GM12878 (cell line): ENCODE measurements at regions of chr21 and their contacts with region 1.

Region 1: DNA sequence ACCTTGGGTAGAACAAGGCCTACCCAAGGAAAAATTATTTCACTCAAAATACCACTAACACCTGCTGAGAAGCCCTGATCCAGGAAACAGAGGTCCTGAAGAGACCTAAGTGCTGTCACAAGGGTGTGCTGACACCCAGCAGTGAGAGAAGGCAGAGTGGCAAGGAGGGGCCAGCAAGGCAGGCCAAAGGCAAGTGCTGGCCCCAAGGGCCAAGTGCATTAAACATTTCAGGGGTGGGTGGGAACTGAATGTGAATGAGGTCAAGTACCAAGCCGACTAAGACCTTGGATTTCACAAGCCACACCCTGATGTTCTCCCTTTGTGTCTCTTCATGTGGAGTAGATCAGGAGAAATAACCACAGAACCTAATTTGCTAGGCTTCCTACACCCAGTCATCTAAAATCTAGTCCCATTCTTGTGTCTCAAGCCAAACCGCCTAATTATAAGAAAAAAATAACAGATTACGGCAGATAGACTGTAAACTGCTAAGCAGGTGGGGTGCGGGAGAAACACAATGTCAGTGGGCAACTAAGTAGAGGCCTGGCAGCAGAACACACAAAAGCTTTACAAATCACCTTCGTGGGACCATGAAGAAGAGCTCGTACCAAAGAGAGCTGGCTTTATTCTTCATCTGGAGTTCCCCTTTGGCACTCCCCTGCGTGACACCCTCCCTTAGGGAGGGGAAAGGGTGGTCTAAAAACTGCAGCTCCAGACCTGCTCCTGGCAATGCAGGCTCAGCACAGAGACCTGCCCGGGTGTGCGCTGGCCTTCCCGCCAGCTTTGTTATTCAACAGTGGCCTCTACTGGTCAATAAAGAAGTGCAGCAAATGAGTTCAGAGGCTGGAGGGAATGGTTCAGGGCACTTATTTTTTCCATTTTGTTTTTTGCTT is 8.7 kb downstream of the UBE2G2 start:
- DNase-seq: no peak
- ATAC-seq: peak; percentile 94
- H3K4me3 ChIP-seq: no peak overlapping the region; the same call in 1 of the 2 replicates
- H3K27ac ChIP-seq: peak overlapping the region; percentile 30; the same call in 1 of the 2 replicates
- H3K4me1 ChIP-seq: peaks cover 19% of the 10 kb centered on the region
- H3K27me3 ChIP-seq: no peaks in the 10 kb centered on the region
- CTCF ChIP-seq: peak; percentile 66 to 77 (median 68)
- EP300 ChIP-seq: no peak
- POLR2A ChIP-seq: no peak
- RAD21 ChIP-seq: peak; percentile 82

Region 2: DNA sequence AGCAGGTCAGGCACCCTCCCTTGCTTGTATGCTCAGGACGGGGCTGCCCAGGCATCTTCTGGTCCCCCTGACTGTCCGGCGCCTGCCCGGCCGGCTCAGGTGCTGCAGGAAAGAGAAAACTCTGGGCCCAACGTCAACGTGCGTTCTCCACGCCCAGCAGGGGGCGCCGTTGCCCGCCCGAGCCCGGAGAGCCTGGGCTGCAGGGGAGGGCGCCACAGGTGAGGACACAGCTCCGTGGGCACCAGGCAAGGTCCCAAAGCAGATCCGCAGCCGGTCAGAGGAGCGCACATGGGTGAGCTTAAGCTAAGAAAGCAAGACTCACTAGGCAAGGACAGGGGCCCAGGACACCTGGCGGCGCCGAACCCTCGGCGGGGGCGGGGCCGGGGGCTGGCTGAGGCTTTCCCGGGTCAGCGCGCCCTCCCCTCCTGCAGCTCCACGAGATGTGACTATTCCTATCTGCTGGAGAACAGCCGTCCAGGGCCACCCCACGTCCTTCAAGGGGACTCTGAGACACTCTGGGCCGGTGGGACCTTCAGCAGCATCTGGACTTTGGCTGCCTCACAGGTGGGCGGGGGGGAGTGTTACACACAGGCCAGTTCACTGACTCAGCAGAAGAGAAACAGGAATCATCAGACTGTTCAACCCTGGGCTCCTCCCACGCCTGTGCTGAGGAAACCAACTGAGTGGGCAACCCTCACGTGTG is 282.3 kb before region 1 on chr21:
- CTCF ChIA-PET with region 1: interaction called, 37 read pairs
- POLR2A ChIA-PET with region 1: no interaction called
- RAD21 ChIA-PET with region 1: interaction called, 17 read pairs
- SMC1A ChIA-PET with region 1: interaction called, 12 read pairs
- in situ Hi-C with region 1: loop called (anchors 5 kb)
- intact Hi-C with region 1: loop called (anchors 1 kb)
- DNase-seq: no peak
- ATAC-seq: peak; percentile 95
- H3K4me3 ChIP-seq: no peak overlapping the region
- H3K27ac ChIP-seq: no peak overlapping the region
- H3K4me1 ChIP-seq: no peaks in the 10 kb centered on the region
- H3K27me3 ChIP-seq: no peaks in the 10 kb centered on the region; a peak in 1 of 4 replicates
- CTCF ChIP-seq: peak; percentile 72 to 87 (median 82)
- EP300 ChIP-seq: no peak
- POLR2A ChIP-seq: no peak
- RAD21 ChIP-seq: peak; percentile 91

Region 3: GRCh38 chr21:44601596-44602462 is 191.1 kb before region 1 on chr21:
- CTCF ChIA-PET with region 1: no interaction called
- POLR2A ChIA-PET with region 1: no interaction called
- RAD21 ChIA-PET with region 1: no interaction called
- SMC1A ChIA-PET with region 1: no interaction called
- in situ Hi-C with region 1: no loop called
- intact Hi-C with region 1: no loop called
- DNase-seq: no peak
- ATAC-seq: no peak
- H3K4me3 ChIP-seq: no peak overlapping the region
- H3K27ac ChIP-seq: no peak overlapping the region
- H3K4me1 ChIP-seq: no peaks in the 10 kb centered on the region
- H3K27me3 ChIP-seq: no peaks in the 10 kb centered on the region
- CTCF ChIP-seq: no peak
- EP300 ChIP-seq: no peak
- POLR2A ChIP-seq: no peak
- RAD21 ChIP-seq: no peak

Region 4: GRCh38 chr21:44666401-44667320 is 126.3 kb before region 1 on chr21 and contains the start of gene KRTAP12-2:
- CTCF ChIA-PET with region 1: no interaction called
- POLR2A ChIA-PET with region 1: no interaction called
- RAD21 ChIA-PET with region 1: no interaction called
- SMC1A ChIA-PET with region 1: no interaction called
- in situ Hi-C with region 1: no loop called
- intact Hi-C with region 1: no loop called
- DNase-seq: no peak
- ATAC-seq: no peak
- H3K4me3 ChIP-seq: no peak within 1 kb of the TSS
- H3K27ac ChIP-seq: no peak within 1 kb of the TSS
- H3K4me1 ChIP-seq: no peaks in the 10 kb centered on the region
- H3K27me3 ChIP-seq: no peaks in the 10 kb centered on the region
- CTCF ChIP-seq: no peak
- EP300 ChIP-seq: no peak
- POLR2A ChIP-seq: no peak
- RAD21 ChIP-seq: no peak
- polyA plus RNA-seq, gene KRTAP12-2: not detected

Region 5: GRCh38 chr21:44771896-44772779 is 20.8 kb before region 1 on chr21:
- CTCF ChIA-PET with region 1: interaction called, 11 read pairs
- POLR2A ChIA-PET with region 1: no interaction called
- RAD21 ChIA-PET with region 1: interaction called, 3 read pairs
- SMC1A ChIA-PET with region 1: interaction called, 5 read pairs
- in situ Hi-C with region 1: no loop called
- intact Hi-C with region 1: no loop called
- DNase-seq: no peak
- ATAC-seq: no peak
- H3K4me3 ChIP-seq: no peak overlapping the region
- H3K27ac ChIP-seq: no peak overlapping the region
- H3K4me1 ChIP-seq: no peaks in the 10 kb centered on the region
- H3K27me3 ChIP-seq: no peaks in the 10 kb centered on the region
- CTCF ChIP-seq: no peak
- EP300 ChIP-seq: no peak
- POLR2A ChIP-seq: no peak
- RAD21 ChIP-seq: no peak

Region 6: GRCh38 chr21:44880762-44881585 is 88.0 kb after region 1 on chr21:
- CTCF ChIA-PET with region 1: interaction called, 67 read pairs
- POLR2A ChIA-PET with region 1: interaction called, 6 read pairs
- RAD21 ChIA-PET with region 1: no interaction called
- SMC1A ChIA-PET with region 1: interaction called, 22 read pairs
- in situ Hi-C with region 1: no loop called
- intact Hi-C with region 1: no loop called
- DNase-seq: no peak
- ATAC-seq: peak; percentile 73
- H3K4me3 ChIP-seq: no peak overlapping the region
- H3K27ac ChIP-seq: peak overlapping the region; percentile 25
- H3K4me1 ChIP-seq: peaks cover 36% of the 10 kb centered on the region
- H3K27me3 ChIP-seq: no peaks in the 10 kb centered on the region
- CTCF ChIP-seq: no peak
- EP300 ChIP-seq: peak in 1 of 2 experiments; percentile 57; a peak in 1 of 4 replicates
- POLR2A ChIP-seq: no peak
- RAD21 ChIP-seq: no peak